Activated CD8-positive, alpha-beta T cell treated with anti-CD3 and anti-CD28 coated beads, Interleukin-2, amount 10 ng/mL, durations not matched to agents 7 days and 5 days (primary cell): ENCODE measurements at regions of chr6 and their contacts with region 1.

Region 1: GRCh38 chr6:20564269-20564668 is 30.0 kb downstream of the CDKAL1 start:
- DNase-seq: no peak
- ATAC-seq: no peak
- H3K4me3 Mint-ChIP-seq: no peak overlapping the region
- H3K27ac Mint-ChIP-seq: no peak overlapping the region
- H3K4me1 Mint-ChIP-seq: peaks cover 15% of the 10 kb centered on the region
- H3K27me3 Mint-ChIP-seq: no peaks in the 10 kb centered on the region

Region 2: GRCh38 chr6:20805021-20805420 is 240.8 kb after region 1 on chr6:
- CTCF ChIA-PET with region 1: no interaction called
- POLR2A ChIA-PET with region 1: no interaction called
- DNase-seq: no peak
- ATAC-seq: no peak
- H3K4me3 Mint-ChIP-seq: no peak overlapping the region
- H3K27ac Mint-ChIP-seq: no peak overlapping the region
- H3K4me1 Mint-ChIP-seq: no peaks in the 10 kb centered on the region
- H3K27me3 Mint-ChIP-seq: no peaks in the 10 kb centered on the region

Region 3: DNA sequence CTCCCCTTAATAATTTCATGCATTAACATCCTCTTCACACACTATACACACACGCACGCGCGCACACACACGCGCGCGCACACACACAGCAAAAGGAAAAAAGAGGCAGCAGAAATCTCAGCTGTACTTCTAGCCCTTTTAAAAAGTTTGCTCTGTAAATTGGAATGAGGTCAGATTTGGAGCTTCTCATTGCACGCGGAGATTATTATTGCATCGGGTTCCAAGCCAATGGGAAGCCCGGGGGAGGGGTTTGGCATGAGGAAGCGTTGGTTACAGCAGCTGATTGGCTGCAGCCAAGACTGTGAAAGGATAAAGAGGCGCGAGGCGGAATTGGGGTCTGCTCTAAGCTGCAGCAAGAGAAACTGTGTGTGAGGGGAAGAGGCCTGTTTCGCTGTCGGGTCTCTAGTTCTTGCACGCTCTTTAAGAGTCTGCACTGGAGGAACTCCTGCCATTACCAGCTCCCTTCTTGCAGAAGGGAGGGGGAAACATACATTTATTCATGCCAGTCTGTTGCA is 1029.2 kb after region 1 on chr6 and contains the start of gene SOX4:
- CTCF ChIA-PET with region 1: interaction called, 58 read pairs
- POLR2A ChIA-PET with region 1: interaction called, 4 read pairs
- DNase-seq: peak; percentile 78
- ATAC-seq: peak; percentile 59
- H3K4me3 Mint-ChIP-seq: peak within 1 kb of the TSS; percentile 80
- H3K27ac Mint-ChIP-seq: peak within 1 kb of the TSS; percentile 77
- H3K4me1 Mint-ChIP-seq: peaks cover 29% of the 10 kb centered on the region
- H3K27me3 Mint-ChIP-seq: peaks cover 48% of the 10 kb centered on the region
- total RNA-seq, gene SOX4: 0.71 to 0.83 TPM